Body of pancreas (tissue), 4 donors: ENCODE measurements at regions of chr9 and their contacts with region 1.

Region 1: GRCh38 chr9:93453047-93453914 is at the start of gene FAM120AOS:
- DNase-seq: peak; percentile 88 to 95 (median 92)
- ATAC-seq: peak; percentile 75
- H3K4me3 ChIP-seq: peak within 1 kb of the TSS; percentile 87 to 91
- H3K27ac ChIP-seq: peak within 1 kb of the TSS; percentile 93 to 98 (median 96)
- H3K4me1 ChIP-seq: peaks cover 58% of the 10 kb centered on the region
- H3K27me3 ChIP-seq: no peaks in the 10 kb centered on the region
- CTCF ChIP-seq: peak in 1 of 7 experiments; percentile 12
- POLR2A ChIP-seq: peak in 2 of 3 donors; percentile 56 to 72
- total RNA-seq, gene FAM120AOS: 35.0 to 44.5 TPM

Region 2: DNA sequence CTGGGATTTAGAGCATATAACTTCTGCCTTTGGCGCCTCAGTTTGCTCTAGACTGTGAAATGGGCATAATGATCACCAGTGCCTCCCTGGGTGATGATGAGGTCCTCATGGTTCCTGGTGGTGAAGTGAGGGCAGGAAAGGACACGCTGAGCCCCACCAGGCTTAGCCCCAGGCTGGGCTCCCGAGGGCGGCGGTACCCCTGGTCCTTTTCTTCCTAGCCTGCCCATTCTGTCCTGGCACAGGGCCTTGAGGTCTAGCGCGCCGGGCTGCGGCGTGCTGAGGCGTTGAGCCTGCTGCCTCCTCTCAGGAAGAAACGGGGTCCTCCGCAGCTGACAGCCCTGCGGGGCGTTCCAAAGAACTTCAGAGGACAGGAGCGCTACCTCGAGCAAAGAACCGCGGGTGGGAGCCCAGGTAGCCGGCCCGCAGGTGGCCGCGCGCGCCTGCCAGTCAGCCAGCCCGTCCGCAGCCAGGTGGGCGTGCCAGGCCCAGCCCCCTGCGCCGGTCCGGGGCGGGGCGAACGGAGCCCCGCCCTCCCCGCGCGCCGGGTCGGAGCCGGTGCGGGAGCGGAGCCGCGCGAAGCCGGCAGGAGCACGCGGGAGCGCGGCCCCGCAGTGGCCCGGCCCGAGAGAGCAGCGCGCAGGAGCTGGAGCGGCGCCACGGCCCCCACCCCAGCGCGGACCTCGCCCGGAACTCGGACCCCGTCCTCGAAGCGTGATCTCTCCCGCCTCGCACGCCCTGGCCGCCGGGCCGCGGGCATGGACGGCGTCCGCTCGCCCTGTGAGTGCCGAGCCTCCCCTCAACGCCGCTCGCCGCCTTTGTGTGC is 269.5 kb before region 1 on chr9 and contains the start of gene WNK2:
- intact Hi-C with region 1: loop called (anchors 10 kb)
- DNase-seq: peak; percentile 51 to 73 (median 58)
- ATAC-seq: peak; percentile 74
- H3K4me3 ChIP-seq: peak within 1 kb of the TSS in 1 of 2 donors; percentile 53
- H3K27ac ChIP-seq: peak within 1 kb of the TSS; percentile 69 to 90 (median 84)
- H3K4me1 ChIP-seq: peaks cover 63% of the 10 kb centered on the region
- H3K27me3 ChIP-seq: no peaks in the 10 kb centered on the region
- CTCF ChIP-seq: peak in 1 of 7 experiments; percentile 6
- POLR2A ChIP-seq: no peak
- total RNA-seq, gene WNK2: 85.4 to 173 TPM